K562 (cell line): ENCODE measurements at regions of chr19 and their contacts with region 1.

Region 1: GRCh38 chr19:4524808-4525562 is 6.7 kb upstream of the PLIN4 start:
- DNase-seq: peak; percentile 65 to 77 (median 74)
- ATAC-seq: peak; percentile 90
- H3K4me3 ChIP-seq: no peak overlapping the region
- H3K27ac ChIP-seq: no peak overlapping the region
- H3K4me1 ChIP-seq: peaks cover 0 to 37% of the 10 kb centered on the region in 2 experiments; a peak in 4 of 5 replicates
- H3K27me3 ChIP-seq: no peaks in the 10 kb centered on the region; a peak in 1 of 5 replicates
- CTCF ChIP-seq: peak; percentile 86 to 90 (median 88)
- EP300 ChIP-seq: no peak
- POLR2A ChIP-seq: no peak
- RAD21 ChIP-seq: peak; percentile 20 to 58; a peak in 3 of 4 replicates

Region 2: GRCh38 chr19:4267101-4267900 is 257.7 kb before region 1 on chr19:
- CTCF ChIA-PET with region 1: interaction called, 12 read pairs
- POLR2A ChIA-PET with region 1: interaction called, 5 read pairs
- in situ Hi-C with region 1: no loop called
- intact Hi-C with region 1: loop called (anchors 1 kb)
- DNase-seq: peak; percentile 80 to 88 (median 83)
- ATAC-seq: peak; percentile 98
- H3K4me3 ChIP-seq: no peak overlapping the region
- H3K27ac ChIP-seq: no peak overlapping the region
- H3K4me1 ChIP-seq: peaks cover 0 to 13% of the 10 kb centered on the region in 2 experiments; a peak in 2 of 5 replicates
- H3K27me3 ChIP-seq: no peaks in the 10 kb centered on the region
- CTCF ChIP-seq: peak; percentile 88 to 93 (median 91)
- EP300 ChIP-seq: no peak
- POLR2A ChIP-seq: peak; percentile 37; the same call in 1 of the 2 replicates
- RAD21 ChIP-seq: peak; percentile 68 to 88